A549 (cell line): ENCODE measurements at regions of chr17 and their contacts with region 1.

Region 1: GRCh38 chr17:61307905-61308886 is 91.4 kb upstream of the TBX2 start:
- DNase-seq: peak; percentile 52 to 79
- ATAC-seq: peak; percentile 81 to 89; a peak in 5 of 6 replicates
- H3K4me3 ChIP-seq: no peak overlapping the region
- H3K27ac ChIP-seq: peak overlapping the region; percentile 26 to 76
- H3K4me1 ChIP-seq: peaks cover 33% of the 10 kb centered on the region
- CTCF ChIP-seq: peak; percentile 23; the same call in 2 of the 3 replicates
- EP300 ChIP-seq: peak; percentile 18 to 64; a peak in 2 of 5 replicates
- POLR2A ChIP-seq: no peak
- RAD21 ChIP-seq: peak in 1 of 2 experiments; percentile 48; a peak in 3 of 5 replicates

Region 2: DNA sequence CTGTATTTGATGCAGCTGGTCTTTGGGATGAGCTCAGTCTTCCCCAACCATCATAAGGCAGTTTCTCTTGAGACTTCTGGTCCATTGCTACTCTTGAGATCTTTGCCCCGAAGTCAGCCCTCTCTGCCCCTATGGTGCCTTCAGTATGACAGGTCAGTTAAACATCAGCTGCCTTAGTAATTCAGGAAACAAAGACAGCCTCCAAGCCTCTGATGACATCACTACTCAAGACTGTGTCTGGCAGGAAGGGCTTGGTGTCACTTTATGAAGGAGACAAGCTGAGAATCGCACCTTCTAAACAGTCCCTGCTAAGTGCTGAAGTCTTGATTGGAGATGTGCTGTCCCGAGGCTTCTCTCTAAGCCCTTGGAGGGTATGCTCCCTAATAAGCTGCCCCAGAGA is 13.4 kb before region 1 on chr17:
- CTCF ChIA-PET with region 1: interaction called, 10 read pairs
- POLR2A ChIA-PET with region 1: no interaction called
- DNase-seq: peak; percentile 50 to 72
- ATAC-seq: peak; percentile 88 to 92
- H3K4me3 ChIP-seq: no peak overlapping the region
- H3K27ac ChIP-seq: peak overlapping the region; percentile 37 to 50; a peak in 3 of 6 replicates
- H3K4me1 ChIP-seq: peaks cover 15% of the 10 kb centered on the region
- CTCF ChIP-seq: no peak
- EP300 ChIP-seq: no peak
- POLR2A ChIP-seq: no peak
- RAD21 ChIP-seq: no peak